HCT116 (cell line): ENCODE measurements at regions of chr2 and their contacts with region 1.

Region 1: GRCh38 chr2:161631855-161632391 is 7.7 kb downstream of the SLC4A10 start:
- DNase-seq: no peak
- ATAC-seq: no peak
- H3K4me3 ChIP-seq: no peak overlapping the region
- H3K27ac ChIP-seq: no peak overlapping the region
- H3K4me1 ChIP-seq: no peaks in the 10 kb centered on the region
- H3K27me3 ChIP-seq: no peaks in the 10 kb centered on the region
- CTCF ChIP-seq: no peak
- POLR2A ChIP-seq: no peak
- RAD21 ChIP-seq: no peak

Region 2: DNA sequence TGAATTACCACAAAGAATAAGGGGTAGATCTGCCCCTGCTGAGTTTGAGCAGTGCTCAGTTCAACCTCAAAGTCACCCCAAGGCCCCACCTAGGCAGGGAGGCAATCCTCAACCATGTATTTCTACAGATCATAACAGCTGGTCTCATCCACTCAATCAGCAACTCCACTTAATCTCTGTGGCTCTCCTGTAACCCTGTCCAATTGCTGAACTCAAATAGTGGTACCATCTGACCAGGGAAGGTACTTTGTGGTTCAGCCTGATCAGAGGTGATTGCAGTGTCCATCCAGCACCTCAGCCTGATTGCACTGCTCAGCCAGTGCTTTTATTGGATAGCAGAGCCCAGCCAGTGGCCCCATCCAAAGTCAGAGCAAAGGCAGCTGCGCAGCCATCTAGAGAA is 98.7 kb before region 1 on chr2:
- CTCF ChIA-PET with region 1: no interaction called
- POLR2A ChIA-PET with region 1: no interaction called
- RAD21 ChIA-PET with region 1: no interaction called
- intact Hi-C with region 1: no loop called
- DNase-seq: no peak
- ATAC-seq: no peak
- H3K4me3 ChIP-seq: no peak overlapping the region
- H3K27ac ChIP-seq: no peak overlapping the region
- H3K4me1 ChIP-seq: no peaks in the 10 kb centered on the region
- H3K27me3 ChIP-seq: no peaks in the 10 kb centered on the region
- CTCF ChIP-seq: no peak
- POLR2A ChIP-seq: no peak
- RAD21 ChIP-seq: no peak

Region 3: GRCh38 chr2:161651547-161651946 is 19.6 kb after region 1 on chr2:
- CTCF ChIA-PET with region 1: no interaction called
- POLR2A ChIA-PET with region 1: no interaction called
- RAD21 ChIA-PET with region 1: no interaction called
- intact Hi-C with region 1: loop called (anchors 2 kb)
- DNase-seq: no peak
- ATAC-seq: no peak
- H3K4me3 ChIP-seq: no peak overlapping the region
- H3K27ac ChIP-seq: no peak overlapping the region
- H3K4me1 ChIP-seq: no peaks in the 10 kb centered on the region
- H3K27me3 ChIP-seq: no peaks in the 10 kb centered on the region
- CTCF ChIP-seq: no peak
- POLR2A ChIP-seq: no peak
- RAD21 ChIP-seq: no peak